Activated T-helper 1 cell treated with anti-CD3 and anti-CD28 coated beads, Interleukin-12 subunit alpha, Interleukin-12 subunit beta, Interleukin-2, Interleukin-4 antibody, amounts not matched to agents 30 ng/mL and 10 ng/mL and 1 ng/mL, durations not matched to agents 14 hours and 24 hours and 36 hours (primary cell): ENCODE measurements at regions of chr10 and their contacts with region 1.

Region 1: GRCh38 chr10:6050801-6051445 is 11.2 kb downstream of the IL2RA start:
- DNase-seq: peak; percentile 92
- H3K4me3 Mint-ChIP-seq: peak overlapping the region; percentile 82
- H3K27ac Mint-ChIP-seq: peak overlapping the region; percentile 91
- H3K4me1 Mint-ChIP-seq: peaks cover 89% of the 10 kb centered on the region
- H3K27me3 Mint-ChIP-seq: no peaks in the 10 kb centered on the region

Region 2: DNA sequence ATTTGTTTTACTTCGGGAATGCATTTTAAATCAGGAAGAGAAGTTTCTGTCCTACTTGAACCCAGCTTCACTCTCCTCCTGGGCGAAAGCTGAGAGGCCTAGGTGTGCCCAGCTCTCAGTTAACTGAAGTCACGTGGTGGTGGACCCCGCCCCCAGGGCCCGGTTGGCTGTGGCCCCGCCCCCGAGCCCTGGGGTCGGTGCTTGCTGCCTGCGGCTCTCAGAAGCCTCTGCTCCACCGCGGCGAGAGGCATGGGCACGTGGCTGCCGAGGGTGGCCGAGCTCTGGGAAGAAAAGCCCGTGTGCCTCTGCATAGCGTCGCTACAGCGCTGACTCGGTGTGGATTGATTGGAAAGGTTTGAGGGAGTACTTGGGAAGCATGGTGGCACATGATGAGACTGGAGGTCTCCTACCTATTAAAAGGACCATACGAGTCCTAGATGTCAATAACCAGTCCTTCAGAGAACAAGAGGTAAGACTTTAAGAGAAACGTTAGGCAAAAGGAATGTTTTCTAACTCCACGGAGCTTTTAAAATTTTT is 604.5 kb before region 1 on chr10:
- intact Hi-C with region 1: loop called (anchors 10 kb)
- DNase-seq: peak; percentile 75
- H3K4me3 Mint-ChIP-seq: peak overlapping the region; percentile 89
- H3K27ac Mint-ChIP-seq: peak overlapping the region; percentile 79
- H3K4me1 Mint-ChIP-seq: peaks cover 62% of the 10 kb centered on the region
- H3K27me3 Mint-ChIP-seq: no peaks in the 10 kb centered on the region

Region 3: DNA sequence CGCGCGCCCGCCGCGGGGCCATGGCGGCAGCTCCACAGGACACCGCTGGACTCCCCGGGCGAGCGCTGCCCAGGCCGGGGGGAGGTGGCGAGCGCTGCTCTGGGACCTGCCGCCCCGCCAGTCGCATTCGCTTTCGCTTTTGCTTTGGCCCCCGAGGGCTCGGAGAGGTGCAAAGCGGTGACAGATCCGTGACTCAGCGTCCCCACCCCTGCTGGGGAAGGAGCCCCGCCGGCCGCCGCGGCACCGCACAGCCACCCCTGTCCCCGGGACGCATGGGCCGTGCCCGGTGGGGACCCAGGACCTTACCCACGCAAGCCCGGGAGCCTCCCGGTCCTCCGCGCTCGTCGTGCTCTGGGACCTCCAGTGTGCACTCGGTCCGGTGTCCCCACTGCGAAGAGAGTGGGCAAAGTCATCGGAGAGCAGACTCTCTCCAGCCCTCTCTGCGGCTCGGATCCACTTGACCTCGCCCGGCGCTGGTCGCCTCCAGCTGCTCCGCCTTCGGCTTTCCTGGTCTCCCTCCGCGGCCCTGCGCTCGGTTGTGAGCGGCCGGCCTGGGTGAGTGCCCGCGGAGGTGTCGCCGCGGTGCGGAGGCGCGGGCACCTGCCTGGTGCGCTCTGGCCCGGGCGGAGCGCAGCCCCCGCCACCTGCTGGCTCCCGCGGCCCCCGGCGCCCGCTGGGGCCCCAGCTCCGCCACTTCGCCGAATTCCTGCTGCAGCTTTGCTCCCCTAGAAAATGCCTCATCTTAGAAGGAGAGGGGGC is 73.3 kb before region 1 on chr10 and contains the start of gene IL15RA:
- intact Hi-C with region 1: loop called (anchors 1 kb)
- DNase-seq: peak; percentile 88
- H3K4me3 Mint-ChIP-seq: peak within 1 kb of the TSS; percentile 93
- H3K27ac Mint-ChIP-seq: peak within 1 kb of the TSS; percentile 90
- H3K4me1 Mint-ChIP-seq: peaks cover 31% of the 10 kb centered on the region
- H3K27me3 Mint-ChIP-seq: peaks cover 3% of the 10 kb centered on the region
- total RNA-seq, gene IL15RA: 23.4 and 24.4 TPM in 2 replicates

Region 4: DNA sequence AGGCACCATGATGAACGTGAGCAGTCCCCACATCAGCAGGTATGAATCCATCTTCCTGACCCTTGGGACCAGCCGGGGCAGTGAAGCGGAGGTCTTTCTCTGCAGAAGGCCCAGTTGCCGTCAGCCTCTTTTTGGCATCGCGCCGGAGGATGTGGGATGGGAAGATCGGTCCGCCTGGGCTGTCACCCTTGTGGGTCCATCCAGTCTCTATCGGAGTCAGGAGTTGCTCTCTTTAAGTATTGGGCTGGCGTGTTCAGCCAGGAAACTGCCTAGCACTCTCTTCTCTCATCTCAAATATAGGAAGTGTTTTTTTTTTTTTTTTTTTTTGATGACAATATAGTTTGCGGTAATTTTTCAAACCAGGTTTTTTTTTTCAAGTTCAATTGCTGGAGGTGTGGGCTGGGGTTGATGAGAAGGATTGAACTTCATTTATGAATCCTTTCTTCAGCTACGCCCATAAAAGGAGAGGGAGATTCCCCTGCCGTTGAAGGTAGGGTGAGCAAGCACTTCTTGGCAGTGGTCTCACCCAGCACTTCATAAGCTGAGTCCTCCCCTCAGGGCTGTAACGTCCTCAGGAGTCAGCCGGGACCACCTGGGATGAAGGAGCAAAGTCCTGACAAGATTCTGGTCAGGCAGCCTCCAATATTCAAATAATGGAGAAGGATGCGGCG is 11.3 kb after region 1 on chr10 and contains the start of gene IL2RA:
- intact Hi-C with region 1: loop called (anchors 1 kb)
- DNase-seq: peak; percentile 66
- H3K4me3 Mint-ChIP-seq: peak within 1 kb of the TSS; percentile 100
- H3K27ac Mint-ChIP-seq: peak within 1 kb of the TSS; percentile 99
- H3K4me1 Mint-ChIP-seq: peaks cover 57% of the 10 kb centered on the region
- H3K27me3 Mint-ChIP-seq: no peaks in the 10 kb centered on the region
- total RNA-seq, gene IL2RA: 1,237 and 1,254 TPM in 2 replicates

Region 5: GRCh38 chr10:6083523-6084475 is 32.9 kb after region 1 on chr10:
- intact Hi-C with region 1: loop called (anchors 1 kb)
- DNase-seq: peak; percentile 67
- H3K4me3 Mint-ChIP-seq: peak overlapping the region; percentile 80
- H3K27ac Mint-ChIP-seq: peak overlapping the region; percentile 94
- H3K4me1 Mint-ChIP-seq: peaks cover 64% of the 10 kb centered on the region
- H3K27me3 Mint-ChIP-seq: no peaks in the 10 kb centered on the region

Region 6: DNA sequence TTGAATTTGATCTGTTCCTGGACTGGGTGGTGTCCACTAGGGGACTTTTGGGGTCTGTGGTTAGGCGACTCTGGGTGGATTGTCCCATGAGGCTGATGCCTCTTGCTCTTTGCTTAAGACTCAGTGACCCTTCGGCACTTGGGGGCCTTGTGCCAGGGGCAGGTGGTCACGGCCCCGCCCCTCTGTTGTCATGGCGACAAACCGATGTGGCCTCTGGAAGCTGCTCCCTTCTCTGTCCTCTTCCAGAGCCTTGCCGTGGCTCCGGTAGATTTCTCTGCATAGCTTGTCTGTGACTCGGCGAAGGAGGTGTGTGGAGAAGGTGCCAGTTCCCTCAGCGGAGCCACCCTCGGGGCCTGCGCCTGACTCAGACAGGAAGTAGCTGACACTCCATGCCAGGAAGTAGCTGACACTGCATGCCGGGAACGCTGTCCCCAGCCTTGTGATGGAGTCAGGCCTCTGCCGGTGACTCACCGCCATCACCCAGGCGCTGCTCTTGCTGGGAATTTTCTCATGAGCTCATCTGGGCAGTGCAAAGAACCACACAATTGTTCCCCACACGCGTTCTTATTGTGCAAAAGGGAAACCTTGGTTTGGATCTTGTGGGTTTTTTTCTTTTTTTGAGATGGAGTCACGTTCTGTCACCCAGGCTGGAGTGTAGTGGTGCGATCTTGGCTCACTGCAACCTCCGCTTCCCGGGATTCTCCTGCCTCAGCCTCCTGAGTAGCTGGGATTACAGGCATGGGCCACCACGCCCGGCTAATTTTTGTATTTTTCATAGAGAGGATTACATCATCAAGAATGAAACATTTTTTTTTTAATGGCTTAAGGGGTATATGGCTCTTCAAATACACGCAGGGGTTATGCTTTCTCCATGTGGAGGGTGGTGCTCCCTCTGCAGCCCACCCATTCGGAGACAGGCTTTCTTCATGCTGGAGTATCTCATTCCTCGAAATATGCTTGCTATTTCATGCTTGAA is 224.4 kb after region 1 on chr10:
- intact Hi-C with region 1: loop called (anchors 1 kb)
- DNase-seq: peak; percentile 86
- H3K4me3 Mint-ChIP-seq: peak overlapping the region; percentile 77
- H3K27ac Mint-ChIP-seq: peak overlapping the region; percentile 97
- H3K4me1 Mint-ChIP-seq: peaks cover 78% of the 10 kb centered on the region
- H3K27me3 Mint-ChIP-seq: no peaks in the 10 kb centered on the region

Region 7: GRCh38 chr10:6713716-6714115 is 662.8 kb after region 1 on chr10:
- intact Hi-C with region 1: no loop called
- DNase-seq: no peak
- H3K4me3 Mint-ChIP-seq: no peak overlapping the region
- H3K27ac Mint-ChIP-seq: no peak overlapping the region
- H3K4me1 Mint-ChIP-seq: peaks cover 13% of the 10 kb centered on the region
- H3K27me3 Mint-ChIP-seq: peaks cover 39% of the 10 kb centered on the region